Gastrocnemius medialis (tissue), 4 donors: ENCODE measurements at regions of chr6 and their contacts with region 1.

Region 1: DNA sequence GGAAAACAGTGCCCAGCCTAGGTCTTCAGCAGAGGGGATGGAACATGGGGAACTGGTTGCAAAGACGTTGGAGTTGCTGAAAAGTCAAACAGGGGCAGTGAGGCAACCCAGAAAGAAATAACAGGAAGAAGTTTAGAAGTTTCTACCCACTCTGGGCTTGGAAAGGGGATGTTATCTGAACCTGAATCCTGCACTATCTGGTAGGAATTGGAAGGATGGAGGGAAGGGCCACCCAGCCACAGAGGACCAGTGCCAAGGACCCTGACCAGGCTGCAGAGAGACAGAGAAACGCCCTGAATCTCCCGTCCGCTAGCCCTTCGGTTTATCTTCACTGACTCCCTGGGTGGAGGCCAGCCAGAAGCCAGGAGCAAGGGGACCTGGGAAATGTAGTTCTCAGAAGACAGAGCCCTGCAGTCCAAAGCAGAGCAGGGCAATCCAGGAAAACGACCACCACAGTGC is 217.3 kb upstream of the RREB1 start:
- DNase-seq: peak in 1 of 2 donors; percentile 67
- ATAC-seq: no peak
- H3K4me3 ChIP-seq: peak overlapping the region in 1 of 4 donors; percentile 5
- H3K27ac ChIP-seq: peak overlapping the region; percentile 93 to 98 (median 96)
- H3K4me1 ChIP-seq: peaks cover 44 to 56% of the 10 kb centered on the region in 2 donors
- H3K27me3 ChIP-seq: no peaks in the 10 kb centered on the region
- CTCF ChIP-seq: no peak
- POLR2A ChIP-seq: no peak

Region 2: GRCh38 chr6:6736791-6737654 is 153.4 kb before region 1 on chr6:
- in situ Hi-C with region 1: loop called in 1 of 4 experiments (anchors 10 kb)
- intact Hi-C with region 1: no loop called
- DNase-seq: peak; percentile 84 to 95
- ATAC-seq: peak; percentile 83 to 85
- H3K4me3 ChIP-seq: peak overlapping the region; percentile 38 to 49 (median 46)
- H3K27ac ChIP-seq: peak overlapping the region; percentile 79 to 91 (median 82)
- H3K4me1 ChIP-seq: peaks cover 20 to 29% of the 10 kb centered on the region in 2 donors
- H3K27me3 ChIP-seq: no peaks in the 10 kb centered on the region
- CTCF ChIP-seq: no peak
- POLR2A ChIP-seq: peak; percentile 19 to 20

Region 3: GRCh38 chr6:6749702-6750491 is 140.5 kb before region 1 on chr6:
- in situ Hi-C with region 1: no loop called
- intact Hi-C with region 1: loop called (anchors 2 kb)
- DNase-seq: peak; percentile 88 to 95
- ATAC-seq: peak; percentile 63 to 78
- H3K4me3 ChIP-seq: peak overlapping the region; percentile 38 to 70 (median 56)
- H3K27ac ChIP-seq: peak overlapping the region; percentile 98 to 99 (median 98)
- H3K4me1 ChIP-seq: peaks cover 45 to 47% of the 10 kb centered on the region in 2 donors
- H3K27me3 ChIP-seq: no peaks in the 10 kb centered on the region
- CTCF ChIP-seq: no peak
- POLR2A ChIP-seq: peak; percentile 56 to 88

Region 4: GRCh38 chr6:6826095-6826901 is 64.1 kb before region 1 on chr6:
- in situ Hi-C with region 1: loop called in 1 of 4 experiments (anchors 5 kb)
- intact Hi-C with region 1: loop called (anchors 1 kb)
- DNase-seq: peak; percentile 88 to 95
- ATAC-seq: peak; percentile 73 to 82
- H3K4me3 ChIP-seq: peak overlapping the region; percentile 32 to 50 (median 39)
- H3K27ac ChIP-seq: peak overlapping the region; percentile 95 to 98 (median 98)
- H3K4me1 ChIP-seq: peaks cover 25 to 31% of the 10 kb centered on the region in 2 donors
- H3K27me3 ChIP-seq: no peaks in the 10 kb centered on the region
- CTCF ChIP-seq: no peak
- POLR2A ChIP-seq: peak; percentile 59 to 70

Region 5: GRCh38 chr6:7140631-7141378 is 250.4 kb after region 1 on chr6:
- in situ Hi-C with region 1: no loop called
- intact Hi-C with region 1: loop called (anchors 5 kb)
- DNase-seq: peak; percentile 92 to 93
- ATAC-seq: peak; percentile 70 to 84
- H3K4me3 ChIP-seq: peak overlapping the region; percentile 64 to 80 (median 72)
- H3K27ac ChIP-seq: peak overlapping the region; percentile 96 to 97 (median 96)
- H3K4me1 ChIP-seq: peaks cover 64 to 69% of the 10 kb centered on the region in 2 donors
- H3K27me3 ChIP-seq: no peaks in the 10 kb centered on the region
- CTCF ChIP-seq: peak in 1 of 5 experiments; percentile 11
- POLR2A ChIP-seq: peak; percentile 94 to 98